ENCODE measurements at regions of chr19 and their contacts with region 1.

Region 1: DNA sequence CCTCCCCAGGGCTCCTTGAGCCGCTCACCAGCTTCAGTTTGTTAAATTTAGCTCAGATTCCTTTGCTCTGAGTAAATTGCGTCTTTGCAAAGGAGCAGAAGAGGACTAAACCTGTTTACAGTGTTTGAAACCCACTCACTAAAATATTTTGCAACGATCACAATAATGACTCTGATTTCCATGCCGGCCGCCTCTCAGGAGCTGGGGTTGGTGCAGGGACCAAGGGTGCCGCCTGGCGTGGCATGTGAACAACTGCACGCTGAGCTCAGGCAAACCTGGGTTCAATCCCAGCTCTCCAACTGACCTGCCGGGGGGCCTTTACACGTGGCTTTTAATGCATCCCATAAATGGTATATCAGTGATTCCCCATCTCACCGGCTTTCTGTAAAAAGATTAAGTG is 68.7 kb upstream of the CACNA1A start:
- DNase-seq: peak in 1 of 2 experiments; percentile 48
- H3K4me3 ChIP-seq: no peak overlapping the region
- H3K27ac ChIP-seq: no peak overlapping the region
- H3K4me1 ChIP-seq: no peaks in the 10 kb centered on the region
- H3K27me3 ChIP-seq: no peaks in the 10 kb centered on the region
- CTCF ChIP-seq: peak; percentile 51 to 63 (median 54)
- EP300 ChIP-seq: no peak
- POLR2A ChIP-seq: no peak
- RAD21 ChIP-seq: peak; percentile 66 to 81

Region 2: GRCh38 chr19:13366529-13367143 is 208.3 kb before region 1 on chr19:
- CTCF ChIA-PET with region 1: interaction called, 10 read pairs
- POLR2A ChIA-PET with region 1: no interaction called
- DNase-seq: peak; percentile 5 to 56
- H3K4me3 ChIP-seq: no peak overlapping the region
- H3K27ac ChIP-seq: no peak overlapping the region
- H3K4me1 ChIP-seq: peaks cover 0 to 7% (median 2%) of the 10 kb centered on the region in 4 experiments; a peak in 3 of 7 replicates
- H3K27me3 ChIP-seq: no peaks in the 10 kb centered on the region
- CTCF ChIP-seq: peak; percentile 20 to 75 (median 61)
- EP300 ChIP-seq: no peak
- POLR2A ChIP-seq: no peak
- RAD21 ChIP-seq: peak; percentile 74 to 77

Region 3: DNA sequence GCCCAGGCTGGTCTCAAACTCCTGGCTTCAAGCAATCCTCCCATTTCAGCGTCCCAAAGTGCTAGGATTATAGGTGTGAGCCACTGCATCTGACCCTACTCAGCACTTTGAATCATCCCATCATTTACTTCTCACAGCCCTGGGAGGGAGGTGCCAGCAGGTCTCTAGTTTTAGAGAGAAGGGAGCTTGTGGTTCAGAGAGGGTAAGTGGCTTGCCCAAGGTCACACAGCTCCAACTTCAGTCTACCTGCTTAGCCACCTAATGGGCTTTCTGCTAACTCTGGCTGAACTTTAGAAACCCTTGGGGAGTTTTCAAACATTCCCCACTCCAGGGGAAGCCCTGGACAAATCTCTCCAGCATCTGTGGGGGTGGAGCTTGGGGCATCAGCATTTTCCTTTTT is 86.9 kb before region 1 on chr19:
- CTCF ChIA-PET with region 1: no interaction called
- POLR2A ChIA-PET with region 1: no interaction called
- DNase-seq: no peak
- H3K4me3 ChIP-seq: no peak overlapping the region
- H3K27ac ChIP-seq: no peak overlapping the region
- H3K4me1 ChIP-seq: peaks cover 0 to 9% (median 0%) of the 10 kb centered on the region in 4 experiments; a peak in 1 of 7 replicates
- H3K27me3 ChIP-seq: no peaks in the 10 kb centered on the region
- CTCF ChIP-seq: no peak
- EP300 ChIP-seq: no peak
- POLR2A ChIP-seq: no peak
- RAD21 ChIP-seq: no peak

Region 4: DNA sequence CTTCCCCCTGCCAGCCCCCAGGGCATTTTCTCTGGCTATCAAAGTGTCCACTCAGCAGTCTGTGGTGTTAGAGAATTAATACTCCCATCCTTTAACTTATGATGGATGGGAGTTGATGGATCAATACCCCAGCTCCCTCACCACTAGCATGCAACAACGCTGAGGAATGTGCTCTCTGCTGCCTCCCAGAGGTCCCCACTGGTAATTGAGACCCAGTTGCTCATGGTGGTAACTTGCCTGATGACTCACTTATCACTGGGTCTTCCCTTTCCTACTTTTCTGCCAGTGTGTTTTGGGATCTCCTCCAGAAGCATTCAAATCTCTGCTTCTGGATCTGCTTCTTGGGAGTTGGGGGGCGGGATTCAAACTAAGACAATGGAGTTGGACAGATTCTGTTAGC is 48.4 kb before region 1 on chr19:
- CTCF ChIA-PET with region 1: interaction called, 10 read pairs
- POLR2A ChIA-PET with region 1: no interaction called
- DNase-seq: peak; percentile 56 to 83
- H3K4me3 ChIP-seq: no peak overlapping the region
- H3K27ac ChIP-seq: no peak overlapping the region
- H3K4me1 ChIP-seq: no peaks in the 10 kb centered on the region
- H3K27me3 ChIP-seq: no peaks in the 10 kb centered on the region; a peak in 1 of 7 replicates
- CTCF ChIP-seq: peak; percentile 74 to 92 (median 83)
- EP300 ChIP-seq: no peak
- POLR2A ChIP-seq: no peak
- RAD21 ChIP-seq: peak; percentile 59 to 67

Region 5: DNA sequence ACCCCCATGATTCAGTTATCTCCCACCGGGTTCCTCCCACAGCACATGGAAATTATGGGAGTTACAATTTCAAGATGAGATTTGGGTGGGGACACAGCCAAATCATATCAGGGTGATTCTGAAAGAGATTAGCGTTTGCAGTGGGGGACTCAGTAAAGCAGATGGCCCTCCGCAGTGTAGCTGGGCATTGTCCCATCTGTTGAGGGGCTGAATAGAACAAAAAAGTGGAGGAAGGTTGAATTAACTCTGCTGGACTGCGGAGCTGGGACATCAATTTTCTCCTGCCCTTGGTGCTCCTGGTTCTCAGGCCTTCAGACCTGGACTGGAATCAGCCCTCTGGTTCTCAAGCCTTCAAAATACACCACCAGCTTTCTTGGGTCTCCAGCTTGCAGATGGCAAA is 13.5 kb before region 1 on chr19:
- CTCF ChIA-PET with region 1: interaction called, 10 read pairs
- POLR2A ChIA-PET with region 1: no interaction called
- DNase-seq: no peak
- H3K4me3 ChIP-seq: no peak overlapping the region
- H3K27ac ChIP-seq: no peak overlapping the region
- H3K4me1 ChIP-seq: no peaks in the 10 kb centered on the region
- H3K27me3 ChIP-seq: no peaks in the 10 kb centered on the region
- CTCF ChIP-seq: no peak
- EP300 ChIP-seq: no peak
- POLR2A ChIP-seq: no peak
- RAD21 ChIP-seq: no peak

Region 6: GRCh38 chr19:13588957-13589833 is 14.3 kb after region 1 on chr19:
- CTCF ChIA-PET with region 1: interaction called, 28 read pairs
- POLR2A ChIA-PET with region 1: no interaction called
- DNase-seq: peak; percentile 36 to 97
- H3K4me3 ChIP-seq: no peak overlapping the region
- H3K27ac ChIP-seq: no peak overlapping the region
- H3K4me1 ChIP-seq: no peaks in the 10 kb centered on the region
- H3K27me3 ChIP-seq: no peaks in the 10 kb centered on the region
- CTCF ChIP-seq: peak; percentile 90 to 95 (median 94)
- EP300 ChIP-seq: no peak
- POLR2A ChIP-seq: no peak
- RAD21 ChIP-seq: peak; percentile 88 to 93

Region 7: GRCh38 chr19:13633109-13633508 is 58.2 kb after region 1 on chr19:
- CTCF ChIA-PET with region 1: no interaction called
- POLR2A ChIA-PET with region 1: no interaction called
- DNase-seq: no peak
- H3K4me3 ChIP-seq: no peak overlapping the region
- H3K27ac ChIP-seq: no peak overlapping the region
- H3K4me1 ChIP-seq: peaks cover 0 to 12% (median 2%) of the 10 kb centered on the region in 4 experiments; a peak in 5 of 7 replicates
- H3K27me3 ChIP-seq: no peaks in the 10 kb centered on the region
- CTCF ChIP-seq: no peak
- EP300 ChIP-seq: no peak
- POLR2A ChIP-seq: no peak
- RAD21 ChIP-seq: no peak

Region 8: GRCh38 chr19:13902993-13903614 is 328.2 kb after region 1 on chr19:
- CTCF ChIA-PET with region 1: no interaction called
- POLR2A ChIA-PET with region 1: no interaction called
- DNase-seq: peak in 1 of 2 experiments; percentile 57
- H3K4me3 ChIP-seq: no peak overlapping the region
- H3K27ac ChIP-seq: no peak overlapping the region
- H3K4me1 ChIP-seq: peaks cover 0 to 6% (median under 1%) of the 10 kb centered on the region in 4 experiments; a peak in 2 of 7 replicates
- H3K27me3 ChIP-seq: peaks cover 0 to 4% (median 3%) of the 10 kb centered on the region in 4 experiments; a peak in 3 of 7 replicates
- CTCF ChIP-seq: peak; percentile 32 to 36 (median 34)
- EP300 ChIP-seq: no peak
- POLR2A ChIP-seq: no peak
- RAD21 ChIP-seq: no peak; a peak in 1 of 4 replicates

Measured in H1 (cell line).